ENCODE measurements at regions of chr22 and their contacts with region 1.

Region 1: GRCh38 chr22:44180706-44181032 is at the start of gene PARVG:
- DNase-seq: peak; percentile 44
- H3K4me3 Mint-ChIP-seq: peak within 1 kb of the TSS; percentile 86
- H3K27ac Mint-ChIP-seq: peak within 1 kb of the TSS; percentile 89
- H3K4me1 Mint-ChIP-seq: peaks cover 23% of the 10 kb centered on the region
- H3K27me3 Mint-ChIP-seq: no peaks in the 10 kb centered on the region
- total RNA-seq, gene PARVG: 58.5 to 59.5 TPM

Region 2: DNA sequence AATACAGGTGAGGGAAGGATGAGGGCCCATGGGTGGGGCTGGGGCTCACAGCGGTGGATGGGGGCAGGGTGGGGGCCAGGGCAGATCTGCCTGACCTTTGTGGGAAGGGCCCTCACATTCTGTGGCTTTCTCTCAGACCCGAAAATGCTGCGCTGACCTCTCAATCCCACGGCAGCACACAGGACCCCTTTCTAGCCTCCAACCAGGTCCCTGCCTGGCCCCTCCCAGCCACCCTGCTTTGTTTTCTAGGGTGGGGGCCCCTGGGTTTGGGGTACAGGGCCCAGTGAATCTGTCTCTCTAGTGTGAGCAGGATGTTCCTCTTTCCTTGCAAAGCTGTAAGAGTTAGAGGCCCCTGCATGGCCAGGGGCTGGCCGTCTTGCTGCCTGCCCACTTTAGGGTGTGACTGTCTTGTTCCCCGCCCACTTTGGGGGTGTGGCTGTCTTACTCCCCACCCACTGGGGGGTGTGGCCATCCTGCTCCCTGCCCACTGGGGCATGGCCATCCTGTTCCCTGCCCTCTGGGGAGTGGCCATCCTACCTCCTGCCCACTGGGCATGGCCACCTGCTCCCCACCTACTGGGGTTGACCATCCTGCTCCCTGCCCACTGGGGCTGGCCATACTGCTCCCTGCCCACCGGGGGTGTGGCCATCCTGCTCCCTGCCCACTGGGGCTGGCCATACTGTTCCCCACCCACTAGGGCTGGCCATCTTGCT is 11.6 kb after region 1 on chr22:
- CTCF ChIA-PET with region 1: interaction called, 3 read pairs
- POLR2A ChIA-PET with region 1: interaction called, 13 read pairs
- intact Hi-C with region 1: loop called (anchors 1 kb)
- DNase-seq: peak; percentile 72
- H3K4me3 Mint-ChIP-seq: no peak overlapping the region
- H3K27ac Mint-ChIP-seq: no peak overlapping the region
- H3K4me1 Mint-ChIP-seq: peaks cover 34% of the 10 kb centered on the region
- H3K27me3 Mint-ChIP-seq: no peaks in the 10 kb centered on the region